ENCODE measurements at regions of chr2 and their contacts with region 1.

Region 1: GRCh38 chr2:203814661-203815540 is 52.7 kb upstream of the CTLA4 start:
- DNase-seq: peak; percentile 77
- H3K4me3 Mint-ChIP-seq: peak overlapping the region; percentile 54
- H3K27ac Mint-ChIP-seq: no peak overlapping the region
- H3K4me1 Mint-ChIP-seq: peaks cover 54% of the 10 kb centered on the region
- H3K27me3 Mint-ChIP-seq: no peaks in the 10 kb centered on the region

Region 2: GRCh38 chr2:202870431-202871299 is 944.2 kb before region 1 on chr2:
- CTCF ChIA-PET with region 1: interaction called, 3 read pairs
- intact Hi-C with region 1: loop called (anchors 2 kb)
- DNase-seq: peak; percentile 85
- H3K4me3 Mint-ChIP-seq: peak overlapping the region; percentile 88
- H3K27ac Mint-ChIP-seq: peak overlapping the region; percentile 72
- H3K4me1 Mint-ChIP-seq: peaks cover 7% of the 10 kb centered on the region
- H3K27me3 Mint-ChIP-seq: no peaks in the 10 kb centered on the region

Region 3: DNA sequence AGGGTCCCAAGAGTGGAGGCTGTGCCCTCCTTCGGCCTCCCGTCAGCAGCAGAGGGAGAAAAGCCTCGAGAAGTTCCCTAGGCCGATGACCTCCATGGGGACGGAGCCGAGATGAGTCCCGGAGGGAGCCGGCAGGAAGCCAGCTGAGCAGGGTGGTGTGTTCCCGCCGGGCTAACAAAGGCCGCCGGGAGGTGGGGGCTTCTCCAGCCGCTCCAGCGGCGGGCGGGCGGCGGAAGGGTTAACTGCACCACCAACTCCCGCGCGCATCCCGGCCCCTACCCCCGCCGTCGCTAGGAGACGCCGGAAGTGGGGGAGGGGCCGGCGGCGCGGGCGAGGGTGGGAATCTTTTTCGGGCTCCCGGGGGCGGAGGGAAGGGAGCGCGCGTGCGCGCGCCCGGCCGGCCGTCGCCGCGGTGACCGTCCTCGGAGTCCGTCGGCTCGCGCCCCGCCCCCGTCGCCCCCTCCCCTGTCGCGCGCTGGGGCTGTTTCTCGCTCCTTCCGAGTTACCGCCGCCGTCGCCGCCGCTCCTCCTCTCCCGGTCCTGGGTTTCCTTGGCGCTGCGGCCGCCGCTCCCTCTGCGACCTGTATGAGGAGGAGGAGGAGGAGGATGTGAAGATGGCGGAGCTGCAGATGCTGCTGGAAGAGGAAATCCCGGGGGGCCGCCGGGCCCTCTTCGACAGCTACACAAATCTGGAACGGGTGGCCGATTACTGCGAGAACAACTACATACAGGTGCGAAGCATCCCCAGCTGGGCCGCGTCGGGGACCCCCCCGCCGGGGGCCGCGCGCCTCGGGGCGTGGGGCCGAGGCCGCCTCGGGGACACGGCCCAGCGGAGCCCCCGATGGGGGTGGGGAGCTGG is 486.8 kb before region 1 on chr2 and contains the start of gene ABI2:
- CTCF ChIA-PET with region 1: no interaction called
- intact Hi-C with region 1: loop called (anchors 2 kb)
- DNase-seq: peak; percentile 65
- H3K4me3 Mint-ChIP-seq: peak within 1 kb of the TSS; percentile 84
- H3K27ac Mint-ChIP-seq: peak within 1 kb of the TSS; percentile 73
- H3K4me1 Mint-ChIP-seq: peaks cover 27% of the 10 kb centered on the region
- H3K27me3 Mint-ChIP-seq: no peaks in the 10 kb centered on the region
- total RNA-seq, gene ABI2: 34.0 to 40.9 TPM

Region 4: GRCh38 chr2:203650860-203651613 is 163.9 kb before region 1 on chr2:
- CTCF ChIA-PET with region 1: interaction called, 9 read pairs
- intact Hi-C with region 1: loop called (anchors 1 kb)
- DNase-seq: peak; percentile 26
- H3K4me3 Mint-ChIP-seq: no peak overlapping the region
- H3K27ac Mint-ChIP-seq: no peak overlapping the region
- H3K4me1 Mint-ChIP-seq: peaks cover 25% of the 10 kb centered on the region
- H3K27me3 Mint-ChIP-seq: no peaks in the 10 kb centered on the region

Region 5: DNA sequence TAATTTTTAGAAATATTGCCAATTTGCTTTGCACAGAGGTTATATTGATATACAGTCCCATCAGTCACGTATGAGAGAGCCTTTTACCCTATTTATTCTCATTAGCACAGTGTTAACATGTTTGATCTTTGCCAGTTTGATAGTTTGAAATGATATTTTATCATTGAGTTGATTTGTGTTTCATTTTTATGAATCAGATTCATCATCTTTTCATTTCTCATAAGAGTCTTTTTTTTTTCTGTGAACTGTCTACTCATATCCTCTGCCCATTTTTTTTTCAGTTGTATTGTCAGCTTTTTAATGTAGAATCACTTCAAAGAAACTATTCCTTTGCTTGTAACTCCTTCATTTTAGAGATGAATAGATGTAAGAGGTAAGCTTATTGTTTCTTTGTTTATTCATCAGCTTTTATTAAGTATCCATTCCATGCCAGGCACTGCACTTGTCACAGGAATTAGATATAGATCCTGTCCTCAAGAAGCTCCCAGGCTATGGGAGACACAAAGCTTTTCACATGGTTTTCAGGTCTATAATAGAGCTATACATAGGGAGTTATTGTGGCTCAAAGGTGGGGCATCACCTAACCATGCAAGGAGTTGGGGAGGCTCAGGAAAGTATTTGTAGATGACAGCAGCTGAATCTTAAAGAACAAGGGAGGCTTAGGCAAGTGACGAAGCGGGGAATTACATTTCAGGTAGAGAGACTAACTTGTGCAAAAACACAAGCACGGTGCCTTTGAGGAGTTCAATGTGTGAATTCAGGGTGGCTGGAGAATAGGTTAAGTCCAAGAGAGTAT is 66.4 kb before region 1 on chr2:
- CTCF ChIA-PET with region 1: interaction called, 10 read pairs
- intact Hi-C with region 1: no loop called
- DNase-seq: peak; percentile 67
- H3K4me3 Mint-ChIP-seq: peak overlapping the region; percentile 32
- H3K27ac Mint-ChIP-seq: peak overlapping the region; percentile 89
- H3K4me1 Mint-ChIP-seq: peaks cover 79% of the 10 kb centered on the region
- H3K27me3 Mint-ChIP-seq: no peaks in the 10 kb centered on the region

Region 6: GRCh38 chr2:203858176-203858575 is 43.3 kb after region 1 on chr2:
- CTCF ChIA-PET with region 1: interaction called, 10 read pairs
- intact Hi-C with region 1: no loop called
- DNase-seq: peak; percentile 65
- H3K4me3 Mint-ChIP-seq: no peak overlapping the region
- H3K27ac Mint-ChIP-seq: peak overlapping the region; percentile 60
- H3K4me1 Mint-ChIP-seq: peaks cover 85% of the 10 kb centered on the region
- H3K27me3 Mint-ChIP-seq: no peaks in the 10 kb centered on the region

Measured in activated naive CD4-positive, alpha-beta T cell treated with anti-CD3 and anti-CD28 coated beads for 36 hours (primary cell).